ENCODE measurements at regions of chr5 and their contacts with region 1.

Region 1: GRCh38 chr5:34486160-34486848 is 169.8 kb upstream of the RAI14 start:
- DNase-seq: peak; percentile 70
- H3K4me3 ChIP-seq: peak overlapping the region in 1 of 2 experiments; percentile 33; a peak in 1 of 4 replicates
- H3K27ac ChIP-seq: peak overlapping the region in 1 of 2 experiments; percentile 97; a peak in 2 of 4 replicates
- H3K4me1 ChIP-seq: peaks cover 0 to 21% of the 10 kb centered on the region in 2 experiments
- H3K27me3 ChIP-seq: no peaks in the 10 kb centered on the region
- CTCF ChIP-seq: peak; percentile 90
- EP300 ChIP-seq: no peak
- RAD21 ChIP-seq: peak; percentile 84

Region 2: DNA sequence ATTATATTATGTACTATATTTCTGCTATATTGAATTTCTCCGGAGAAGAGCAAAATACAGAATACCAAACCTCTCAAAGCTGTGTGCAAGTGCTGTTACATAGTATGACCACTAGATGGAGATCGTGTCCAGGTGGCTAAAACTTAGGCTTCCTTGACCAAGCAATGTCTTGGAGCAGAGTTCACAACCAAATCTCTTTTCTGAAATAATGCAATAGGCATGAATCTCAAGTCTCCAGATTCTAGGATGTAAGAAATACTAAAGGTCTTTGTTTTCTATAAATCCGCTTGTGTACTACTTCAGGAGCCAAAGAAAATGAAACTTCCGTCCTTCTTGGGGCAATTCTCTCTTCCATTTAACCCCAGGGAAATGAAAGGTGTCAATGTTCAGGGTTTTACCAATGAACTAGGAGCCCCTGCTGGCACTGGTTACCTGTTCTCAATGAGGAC is 11.7 kb before region 1 on chr5:
- CTCF ChIA-PET with region 1: interaction called, 61 read pairs
- POLR2A ChIA-PET with region 1: no interaction called
- DNase-seq: peak; percentile 53
- H3K4me3 ChIP-seq: no peak overlapping the region
- H3K27ac ChIP-seq: no peak overlapping the region
- H3K4me1 ChIP-seq: no peaks in the 10 kb centered on the region
- H3K27me3 ChIP-seq: no peaks in the 10 kb centered on the region
- CTCF ChIP-seq: peak; percentile 98
- EP300 ChIP-seq: no peak
- RAD21 ChIP-seq: peak; percentile 81

Region 3: GRCh38 chr5:34499001-34499734 is 12.9 kb after region 1 on chr5:
- CTCF ChIA-PET with region 1: interaction called, 28 read pairs
- POLR2A ChIA-PET with region 1: no interaction called
- DNase-seq: no peak
- H3K4me3 ChIP-seq: no peak overlapping the region
- H3K27ac ChIP-seq: peak overlapping the region in 1 of 2 experiments; percentile 94; a peak in 2 of 4 replicates
- H3K4me1 ChIP-seq: peaks cover 3 to 16% of the 10 kb centered on the region in 2 experiments; a peak in 3 of 4 replicates
- H3K27me3 ChIP-seq: no peaks in the 10 kb centered on the region
- CTCF ChIP-seq: no peak
- EP300 ChIP-seq: no peak
- RAD21 ChIP-seq: no peak

Region 4: DNA sequence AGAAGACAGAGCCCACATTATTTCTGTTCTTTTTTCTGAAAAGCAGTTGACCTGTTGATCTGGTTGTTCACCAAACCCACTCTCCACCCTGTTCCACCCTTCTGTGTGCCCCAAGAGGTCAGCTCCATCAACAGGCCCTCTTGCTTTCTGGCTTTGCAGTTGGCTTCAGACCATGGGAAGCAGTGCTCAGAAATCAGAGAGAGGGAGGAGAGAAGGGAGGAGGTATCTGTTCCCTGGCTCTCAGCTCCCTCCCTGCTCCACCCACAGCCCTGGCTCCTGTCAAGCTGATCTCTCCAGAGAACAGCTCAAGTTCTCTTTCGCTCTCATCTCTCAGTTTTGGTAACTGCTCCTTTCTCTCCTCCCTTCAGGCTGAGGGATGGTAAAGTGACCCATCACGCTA is 25.6 kb after region 1 on chr5:
- CTCF ChIA-PET with region 1: interaction called, 12 read pairs
- POLR2A ChIA-PET with region 1: no interaction called
- DNase-seq: no peak
- H3K4me3 ChIP-seq: no peak overlapping the region
- H3K27ac ChIP-seq: no peak overlapping the region
- H3K4me1 ChIP-seq: peaks cover 0 to 5% of the 10 kb centered on the region in 2 experiments; a peak in 1 of 4 replicates
- H3K27me3 ChIP-seq: no peaks in the 10 kb centered on the region
- CTCF ChIP-seq: no peak
- EP300 ChIP-seq: no peak
- RAD21 ChIP-seq: no peak

Region 5: GRCh38 chr5:34522599-34523386 is 36.5 kb after region 1 on chr5:
- CTCF ChIA-PET with region 1: interaction called, 21 read pairs
- POLR2A ChIA-PET with region 1: no interaction called
- DNase-seq: peak; percentile 64
- H3K4me3 ChIP-seq: peak overlapping the region in 1 of 2 experiments; percentile 29; a peak in 1 of 4 replicates
- H3K27ac ChIP-seq: peak overlapping the region in 1 of 2 experiments; percentile 79; a peak in 3 of 4 replicates
- H3K4me1 ChIP-seq: peaks cover 0 to 17% of the 10 kb centered on the region in 2 experiments; a peak in 2 of 4 replicates
- H3K27me3 ChIP-seq: no peaks in the 10 kb centered on the region
- CTCF ChIP-seq: peak; percentile 83
- EP300 ChIP-seq: no peak
- RAD21 ChIP-seq: peak; percentile 85

Region 6: DNA sequence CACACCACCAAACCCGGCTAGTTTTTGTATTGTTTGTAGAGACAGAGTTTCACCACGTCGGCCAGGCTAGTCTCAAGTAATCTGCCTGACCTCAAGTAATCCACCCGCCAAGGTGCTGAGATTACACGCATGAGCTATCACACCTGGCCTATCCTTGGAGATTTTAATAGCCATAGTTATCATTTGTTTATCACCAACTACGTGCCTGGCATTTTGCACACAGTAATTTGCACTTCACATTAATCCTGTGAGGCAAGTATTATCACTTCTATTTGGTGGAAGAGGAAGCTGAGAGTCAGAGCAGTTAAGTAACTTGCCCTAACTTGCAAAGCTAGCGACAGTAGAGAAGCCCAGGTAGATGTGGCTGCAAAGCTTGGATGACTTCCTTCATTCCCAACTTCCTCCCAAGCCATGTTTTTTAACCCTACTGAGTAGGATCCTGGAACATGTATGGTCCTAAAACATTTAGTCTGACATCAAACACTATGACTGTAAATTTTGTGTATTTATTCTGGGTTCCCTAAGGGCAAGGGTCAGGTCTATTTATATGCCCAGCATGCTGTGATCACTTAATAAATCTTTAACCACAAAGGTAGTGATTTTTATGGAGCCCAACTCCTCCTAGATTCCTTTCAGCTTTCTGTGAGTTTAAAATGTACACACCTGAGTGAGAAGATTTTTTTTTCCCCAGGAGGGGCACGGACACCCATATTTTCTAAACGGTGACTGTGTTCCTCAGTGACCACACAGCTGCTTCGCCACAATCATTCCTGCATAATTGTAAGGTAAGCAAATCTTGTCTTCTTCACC is 69.6 kb after region 1 on chr5:
- CTCF ChIA-PET with region 1: no interaction called
- POLR2A ChIA-PET with region 1: no interaction called
- DNase-seq: no peak
- H3K4me3 ChIP-seq: no peak overlapping the region
- H3K27ac ChIP-seq: no peak overlapping the region
- H3K4me1 ChIP-seq: no peaks in the 10 kb centered on the region; a peak in 1 of 4 replicates
- H3K27me3 ChIP-seq: no peaks in the 10 kb centered on the region
- CTCF ChIP-seq: no peak
- EP300 ChIP-seq: no peak
- RAD21 ChIP-seq: no peak

Region 7: GRCh38 chr5:35003018-35003957 is 517.0 kb after region 1 on chr5:
- CTCF ChIA-PET with region 1: interaction called, 11 read pairs
- POLR2A ChIA-PET with region 1: no interaction called
- DNase-seq: peak; percentile 69
- H3K4me3 ChIP-seq: peak overlapping the region in 1 of 2 experiments; percentile 35; a peak in 1 of 4 replicates
- H3K27ac ChIP-seq: no peak overlapping the region
- H3K4me1 ChIP-seq: peaks cover 0 to 2% of the 10 kb centered on the region in 2 experiments; a peak in 1 of 4 replicates
- H3K27me3 ChIP-seq: peaks cover 14% of the 10 kb centered on the region; the same call in 1 of the 2 replicates
- CTCF ChIP-seq: peak; percentile 94
- EP300 ChIP-seq: no peak
- RAD21 ChIP-seq: peak; percentile 82

Measured in SK-N-SH (cell line).